Endothelial cell of umbilical vein (primary cell): ENCODE measurements at regions of chr14 and their contacts with region 1.

Region 1: DNA sequence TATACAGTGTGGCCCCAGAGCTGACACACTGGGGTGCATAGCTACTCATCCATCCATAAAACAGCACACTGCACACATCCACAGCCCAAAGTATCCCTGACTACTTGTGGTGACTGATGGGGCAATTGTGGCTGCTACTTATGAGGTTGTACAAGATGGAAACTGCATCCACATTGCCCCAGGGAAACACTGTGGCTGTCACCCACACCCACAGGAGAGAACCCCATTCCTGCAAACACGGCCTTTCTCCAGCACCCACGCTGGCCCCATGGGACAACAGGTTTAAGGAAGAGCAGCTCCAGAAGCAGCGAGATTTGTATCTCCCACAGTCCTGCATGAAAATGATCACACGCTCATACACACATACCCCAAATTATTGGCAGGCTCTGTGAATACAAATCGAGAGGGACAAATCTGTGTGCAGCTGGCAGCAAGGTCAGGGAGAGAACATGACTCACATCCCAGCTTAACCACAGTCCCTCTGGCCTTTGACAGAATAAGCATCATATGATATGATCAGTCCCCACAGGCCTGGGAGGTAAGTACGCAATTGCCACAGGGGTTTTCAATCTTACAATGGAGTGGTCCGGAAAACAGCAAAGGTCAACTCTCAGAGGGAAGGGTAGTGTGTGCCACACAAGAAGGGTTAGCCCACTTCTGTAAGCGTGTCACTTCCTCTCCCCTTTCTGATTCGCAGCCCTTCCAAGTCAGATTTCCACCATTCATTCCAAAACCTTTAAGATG is 61.9 kb downstream of the ESR2 start:
- DNase-seq: peak; percentile 95
- H3K4me3 ChIP-seq: no peak overlapping the region
- H3K27ac ChIP-seq: peak overlapping the region; percentile 88
- H3K4me1 ChIP-seq: peaks cover 24% of the 10 kb centered on the region
- H3K27me3 ChIP-seq: no peaks in the 10 kb centered on the region
- CTCF ChIP-seq: no peak
- POLR2A ChIP-seq: peak; percentile 49

Region 2: GRCh38 chr14:64213086-64213485 is 19.2 kb before region 1 on chr14:
- CTCF ChIA-PET with region 1: no interaction called
- POLR2A ChIA-PET with region 1: no interaction called
- dilution Hi-C with region 1: no loop called
- intact Hi-C with region 1: no loop called
- DNase-seq: no peak
- H3K4me3 ChIP-seq: no peak overlapping the region
- H3K27ac ChIP-seq: no peak overlapping the region
- H3K4me1 ChIP-seq: peaks cover 2% of the 10 kb centered on the region
- H3K27me3 ChIP-seq: no peaks in the 10 kb centered on the region
- CTCF ChIP-seq: no peak
- POLR2A ChIP-seq: no peak

Region 3: GRCh38 chr14:64279704-64280668 is 47.7 kb after region 1 on chr14:
- CTCF ChIA-PET with region 1: no interaction called
- POLR2A ChIA-PET with region 1: no interaction called
- dilution Hi-C with region 1: no loop called
- intact Hi-C with region 1: loop called (anchors 1 kb)
- DNase-seq: peak; percentile 92
- H3K4me3 ChIP-seq: no peak overlapping the region
- H3K27ac ChIP-seq: no peak overlapping the region
- H3K4me1 ChIP-seq: peaks cover 22% of the 10 kb centered on the region
- H3K27me3 ChIP-seq: no peaks in the 10 kb centered on the region
- CTCF ChIP-seq: no peak
- POLR2A ChIP-seq: peak; percentile 55